WTC11 (cell line): ENCODE measurements at regions of chr10 and their contacts with region 1.

Region 1: GRCh38 chr10:117216611-117217195 is 19.4 kb downstream of the KCNK18 start:
- DNase-seq: peak; percentile 83
- ATAC-seq: peak; percentile 52
- H3K4me3 Mint-ChIP-seq: peak overlapping the region; percentile 76
- H3K27ac Mint-ChIP-seq: no peak overlapping the region
- H3K4me1 Mint-ChIP-seq: peaks cover 17% of the 10 kb centered on the region
- H3K27me3 Mint-ChIP-seq: peaks cover 72% of the 10 kb centered on the region
- CTCF ChIP-seq: peak; percentile 99

Region 2: GRCh38 chr10:116892907-116893685 is 323.6 kb before region 1 on chr10:
- CTCF ChIA-PET with region 1: no interaction called
- POLR2A ChIA-PET with region 1: no interaction called
- DNase-seq: no peak
- ATAC-seq: no peak; the same call in 1 of the 2 replicates
- H3K4me3 Mint-ChIP-seq: no peak overlapping the region
- H3K27ac Mint-ChIP-seq: no peak overlapping the region; the same call in 1 of the 2 replicates
- H3K4me1 Mint-ChIP-seq: peaks cover 29% of the 10 kb centered on the region
- H3K27me3 Mint-ChIP-seq: no peaks in the 10 kb centered on the region
- CTCF ChIP-seq: no peak

Region 3: GRCh38 chr10:117112220-117112619 is 104.5 kb before region 1 on chr10:
- CTCF ChIA-PET with region 1: no interaction called
- POLR2A ChIA-PET with region 1: no interaction called
- DNase-seq: no peak
- ATAC-seq: no peak; the same call in 1 of the 2 replicates
- H3K4me3 Mint-ChIP-seq: no peak overlapping the region
- H3K27ac Mint-ChIP-seq: no peak overlapping the region
- H3K4me1 Mint-ChIP-seq: no peaks in the 10 kb centered on the region
- H3K27me3 Mint-ChIP-seq: peaks cover 16% of the 10 kb centered on the region
- CTCF ChIP-seq: no peak

Region 4: DNA sequence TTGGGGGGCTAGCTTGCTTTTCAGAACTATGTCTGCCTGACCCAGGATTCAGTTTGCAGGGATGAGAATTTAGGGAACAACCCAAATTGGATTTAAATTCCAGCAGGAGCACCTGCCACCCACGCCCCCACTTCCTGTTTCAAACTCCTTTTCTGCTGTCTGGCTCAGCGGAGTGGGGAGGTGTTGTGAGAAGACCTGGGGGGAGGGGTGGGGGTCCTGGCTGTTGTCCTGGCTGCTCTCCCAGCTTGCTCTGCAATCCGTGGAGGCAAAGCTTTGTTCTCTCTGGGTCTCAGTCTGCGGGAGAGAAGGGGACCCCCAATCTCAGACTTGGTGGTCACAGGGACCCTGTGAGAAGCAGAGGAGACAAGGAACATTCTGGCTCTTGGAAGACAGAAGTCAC is 18.6 kb before region 1 on chr10:
- CTCF ChIA-PET with region 1: interaction called, 20 read pairs
- POLR2A ChIA-PET with region 1: no interaction called
- DNase-seq: no peak
- ATAC-seq: peak; percentile 60
- H3K4me3 Mint-ChIP-seq: no peak overlapping the region
- H3K27ac Mint-ChIP-seq: no peak overlapping the region
- H3K4me1 Mint-ChIP-seq: 0 out of 2 replicates have a peak, but pooled peaks cover 7% of the 10 kb centered on the region
- H3K27me3 Mint-ChIP-seq: no peaks in the 10 kb centered on the region; the same call in 1 of the 2 replicates
- CTCF ChIP-seq: no peak

Region 5: GRCh38 chr10:117249493-117250093 is 32.9 kb after region 1 on chr10:
- CTCF ChIA-PET with region 1: interaction called, 12 read pairs
- POLR2A ChIA-PET with region 1: no interaction called
- DNase-seq: no peak
- ATAC-seq: no peak
- H3K4me3 Mint-ChIP-seq: no peak overlapping the region
- H3K27ac Mint-ChIP-seq: no peak overlapping the region
- H3K4me1 Mint-ChIP-seq: peaks cover 28% of the 10 kb centered on the region
- H3K27me3 Mint-ChIP-seq: no peaks in the 10 kb centered on the region
- CTCF ChIP-seq: no peak

Region 6: DNA sequence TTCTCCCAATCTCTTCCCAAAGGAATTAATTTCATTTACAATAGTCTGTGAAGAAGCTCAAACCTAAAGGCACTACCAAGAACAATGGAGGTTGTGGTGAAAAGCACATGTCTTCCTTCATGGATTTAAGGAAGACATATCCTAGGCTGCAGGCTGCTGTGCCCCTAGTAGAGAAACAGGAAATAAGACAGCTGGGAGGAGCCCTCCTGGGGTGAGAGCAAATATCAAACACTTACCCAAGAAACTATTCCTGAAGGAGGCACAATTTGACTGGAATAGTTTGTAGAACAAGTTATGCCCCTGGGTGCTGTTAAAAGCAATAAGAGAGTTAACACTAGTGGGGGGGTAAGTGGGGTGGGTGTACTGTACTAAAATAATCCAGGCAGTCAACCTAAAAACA is 128.4 kb after region 1 on chr10:
- CTCF ChIA-PET with region 1: interaction called, 18 read pairs
- POLR2A ChIA-PET with region 1: no interaction called
- DNase-seq: no peak
- ATAC-seq: peak; percentile 24
- H3K4me3 Mint-ChIP-seq: peak overlapping the region; percentile 36
- H3K27ac Mint-ChIP-seq: peak overlapping the region; percentile 100
- H3K4me1 Mint-ChIP-seq: peaks cover 82% of the 10 kb centered on the region
- H3K27me3 Mint-ChIP-seq: no peaks in the 10 kb centered on the region
- CTCF ChIP-seq: no peak

Region 7: DNA sequence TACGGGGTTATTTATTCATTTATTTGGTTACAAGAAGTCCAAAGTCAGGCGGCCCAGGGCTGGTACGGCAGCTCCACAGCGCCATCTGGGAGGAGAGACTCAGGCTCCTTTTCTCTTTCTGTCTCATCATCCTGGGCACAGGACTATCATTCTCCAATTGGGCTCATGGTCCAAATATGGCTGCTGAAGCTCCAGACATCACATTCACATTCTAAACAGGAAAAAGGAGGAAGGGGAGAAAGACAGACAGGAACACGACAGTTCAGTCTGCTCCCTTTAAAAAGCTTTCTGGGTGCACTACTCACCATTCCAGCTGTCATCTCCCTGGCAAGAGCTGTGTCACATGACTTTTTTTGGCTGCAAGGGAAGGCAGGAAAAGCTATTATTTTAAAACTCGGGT is 232.9 kb after region 1 on chr10:
- CTCF ChIA-PET with region 1: interaction called, 49 read pairs
- POLR2A ChIA-PET with region 1: interaction called, 3 read pairs
- DNase-seq: peak; percentile 38
- ATAC-seq: peak; percentile 48; the same call in 1 of the 2 replicates
- H3K4me3 Mint-ChIP-seq: no peak overlapping the region
- H3K27ac Mint-ChIP-seq: no peak overlapping the region
- H3K4me1 Mint-ChIP-seq: peaks cover 10% of the 10 kb centered on the region
- H3K27me3 Mint-ChIP-seq: peaks cover 19% of the 10 kb centered on the region
- CTCF ChIP-seq: no peak

Region 8: GRCh38 chr10:117496616-117497028 is 279.9 kb after region 1 on chr10:
- CTCF ChIA-PET with region 1: interaction called, 13 read pairs
- POLR2A ChIA-PET with region 1: no interaction called
- DNase-seq: peak; percentile 82
- ATAC-seq: peak; percentile 88
- H3K4me3 Mint-ChIP-seq: no peak overlapping the region
- H3K27ac Mint-ChIP-seq: no peak overlapping the region
- H3K4me1 Mint-ChIP-seq: peaks cover 2% of the 10 kb centered on the region; the same call in 1 of the 2 replicates
- H3K27me3 Mint-ChIP-seq: peaks cover 35% of the 10 kb centered on the region
- CTCF ChIP-seq: peak; percentile 88